ENCODE measurements at regions of chr12 and their contacts with region 1.

Region 1: DNA sequence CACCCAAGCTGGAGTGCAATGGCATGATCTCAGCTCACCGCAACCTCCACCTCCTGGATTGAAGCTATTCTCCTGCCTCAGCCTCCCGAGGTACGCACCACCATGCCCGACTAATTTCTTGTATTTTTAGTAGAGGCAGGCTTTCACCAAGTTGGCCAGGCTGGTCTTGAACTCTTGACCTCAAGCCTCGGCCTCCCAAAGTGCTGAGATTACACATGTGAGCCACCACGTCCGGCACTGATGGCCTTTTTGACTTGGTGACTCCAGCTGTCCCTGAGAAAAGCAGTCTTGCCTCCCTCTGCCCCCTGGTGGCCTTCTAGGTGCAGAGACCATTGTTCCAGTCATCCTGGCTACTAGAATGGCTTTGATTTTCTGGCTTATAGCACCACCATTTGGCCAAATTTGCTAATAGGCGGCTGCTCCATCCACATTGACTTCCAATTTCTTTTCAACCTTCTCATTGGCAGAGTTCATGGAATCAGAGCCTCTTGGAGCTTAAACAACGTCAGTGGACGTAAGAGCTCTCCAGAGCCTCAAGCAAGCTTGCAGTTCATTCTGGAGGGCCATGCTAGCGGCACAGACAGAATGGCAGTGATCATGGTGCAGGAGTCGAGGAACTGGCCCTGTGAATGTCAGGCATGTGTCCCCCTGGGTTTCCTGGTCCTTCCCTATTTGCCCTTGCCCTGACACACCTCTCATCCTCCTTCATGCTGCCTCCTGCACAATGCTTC is 25.4 kb upstream of the EIF4B start:
- DNase-seq: peak; percentile 80
- H3K4me3 ChIP-seq: no peak overlapping the region
- H3K27ac ChIP-seq: no peak overlapping the region
- H3K4me1 ChIP-seq: no peaks in the 10 kb centered on the region
- H3K27me3 ChIP-seq: no peaks in the 10 kb centered on the region
- CTCF ChIP-seq: peak; percentile 99

Region 2: GRCh38 chr12:52139552-52140062 is 841.3 kb before region 1 on chr12:
- CTCF ChIA-PET with region 1: no interaction called
- dilution Hi-C with region 1: no loop called
- in situ Hi-C with region 1: loop called in 1 of 2 experiments (anchors 10 kb)
- intact Hi-C with region 1: loop called (anchors 1 kb)
- DNase-seq: peak; percentile 53
- H3K4me3 ChIP-seq: no peak overlapping the region
- H3K27ac ChIP-seq: no peak overlapping the region
- H3K4me1 ChIP-seq: peaks cover 15% of the 10 kb centered on the region
- H3K27me3 ChIP-seq: no peaks in the 10 kb centered on the region
- CTCF ChIP-seq: peak; percentile 98

Region 3: DNA sequence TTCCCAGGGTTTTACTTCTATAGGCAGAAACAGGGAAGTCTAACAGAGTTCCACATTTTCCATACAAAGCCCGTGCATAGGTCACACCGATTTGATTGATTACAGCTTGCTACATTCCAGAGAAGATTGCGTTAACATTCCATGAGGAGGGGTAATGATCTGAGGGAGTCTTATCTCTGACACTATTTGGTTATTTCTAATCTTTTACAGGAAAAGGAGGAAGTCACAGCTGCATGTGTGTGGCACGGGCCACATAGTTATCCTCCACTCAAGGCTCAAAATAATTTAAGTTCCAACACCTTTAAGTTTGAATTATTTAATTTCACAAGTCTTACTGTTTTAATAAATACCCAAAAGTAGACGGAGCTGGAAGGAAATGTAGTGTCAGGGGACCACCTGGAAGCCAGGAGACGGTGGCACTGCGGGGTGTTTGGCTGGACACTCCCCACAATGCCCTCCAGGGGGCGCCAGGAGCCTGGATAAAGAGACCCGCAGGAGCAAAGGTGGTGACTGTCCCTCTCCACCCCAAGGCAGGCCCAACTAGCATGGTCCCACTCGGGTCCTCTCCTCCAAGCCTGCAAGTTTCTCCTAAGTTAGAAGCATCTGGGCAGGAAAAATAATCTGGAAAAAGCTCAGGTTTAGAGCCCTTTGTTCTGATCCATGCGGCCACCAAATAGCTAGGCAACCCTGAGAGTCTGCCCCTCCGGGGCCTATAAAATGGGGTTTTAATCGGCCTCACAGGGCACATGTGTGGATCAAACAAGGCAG is 96.1 kb before region 1 on chr12:
- CTCF ChIA-PET with region 1: interaction called, 25 read pairs
- dilution Hi-C with region 1: no loop called
- in situ Hi-C with region 1: loop called (anchors 5 kb)
- intact Hi-C with region 1: loop called (anchors 1 kb)
- DNase-seq: no peak
- H3K4me3 ChIP-seq: no peak overlapping the region
- H3K27ac ChIP-seq: no peak overlapping the region
- H3K4me1 ChIP-seq: peaks cover 2% of the 10 kb centered on the region
- H3K27me3 ChIP-seq: no peaks in the 10 kb centered on the region
- CTCF ChIP-seq: peak; percentile 75 to 92

Region 4: GRCh38 chr12:52892172-52892852 is 88.5 kb before region 1 on chr12:
- CTCF ChIA-PET with region 1: interaction called, 3 read pairs
- dilution Hi-C with region 1: loop called (anchors 5 kb)
- in situ Hi-C with region 1: loop called (anchors 5 kb)
- intact Hi-C with region 1: no loop called
- DNase-seq: no peak
- H3K4me3 ChIP-seq: no peak overlapping the region
- H3K27ac ChIP-seq: no peak overlapping the region
- H3K4me1 ChIP-seq: no peaks in the 10 kb centered on the region
- H3K27me3 ChIP-seq: no peaks in the 10 kb centered on the region
- CTCF ChIP-seq: no peak

Measured in mammary epithelial cell (primary cell).